OCI-LY7 (cell line): ENCODE measurements at regions of chr3 and their contacts with region 1.

Region 1: GRCh38 chr3:97971677-97972567 is at the start of gene RIOX2:
- DNase-seq: peak; percentile 79
- H3K4me3 ChIP-seq: peak within 1 kb of the TSS; percentile 73
- H3K27ac ChIP-seq: peak within 1 kb of the TSS; percentile 46
- H3K4me1 ChIP-seq: peaks cover 32% of the 10 kb centered on the region
- CTCF ChIP-seq: no peak
- total RNA-seq, gene RIOX2: 26.1 and 26.8 TPM in 2 replicates

Region 2: GRCh38 chr3:97764407-97765238 is 207.3 kb before region 1 on chr3 and contains the start of gene ARL6:
- CTCF ChIA-PET with region 1: no interaction called
- POLR2A ChIA-PET with region 1: interaction called, 3 read pairs
- intact Hi-C with region 1: loop called (anchors 5 kb)
- DNase-seq: peak; percentile 78
- H3K4me3 ChIP-seq: peak within 1 kb of the TSS; percentile 86
- H3K27ac ChIP-seq: peak within 1 kb of the TSS; percentile 48
- H3K4me1 ChIP-seq: peaks cover 10% of the 10 kb centered on the region
- CTCF ChIP-seq: peak; percentile 57; the same call in 1 of the 2 replicates
- total RNA-seq, gene ARL6: 5.0 and 8.6 TPM in 2 replicates

Region 3: DNA sequence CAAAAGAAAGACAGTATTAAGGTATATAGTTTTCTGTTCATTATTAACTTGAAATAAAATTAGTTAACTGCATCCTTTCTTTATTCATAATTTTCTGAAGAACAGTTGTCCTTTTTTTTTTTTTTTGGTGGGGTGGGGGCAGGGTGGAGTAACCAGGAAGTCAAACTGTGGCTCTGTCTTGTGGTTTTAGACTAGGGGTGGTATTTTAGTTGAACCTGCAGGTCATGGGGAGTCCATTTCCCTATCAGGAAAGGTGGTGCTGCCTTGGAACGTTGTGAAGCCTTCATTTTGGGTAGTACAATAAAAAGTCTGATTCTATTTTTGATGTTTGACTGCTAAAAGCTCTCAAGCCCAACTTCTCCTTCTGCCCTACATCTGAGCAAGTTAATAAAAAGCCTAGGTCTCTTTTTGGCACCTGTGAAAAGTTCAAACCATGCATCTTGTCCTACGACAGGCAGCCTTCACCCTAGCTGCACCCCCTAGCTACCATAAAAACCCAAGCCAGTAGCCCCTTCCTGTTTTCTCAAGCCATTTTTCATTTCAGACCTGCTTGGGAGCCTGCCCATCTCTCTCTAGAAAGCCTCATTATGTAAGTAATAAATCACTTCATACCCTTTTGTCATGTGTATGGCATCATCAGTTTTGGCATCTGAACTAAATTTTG is 31.5 kb after region 1 on chr3:
- CTCF ChIA-PET with region 1: no interaction called
- POLR2A ChIA-PET with region 1: interaction called, 5 read pairs
- intact Hi-C with region 1: loop called (anchors 2 kb)
- DNase-seq: peak; percentile 10
- H3K4me3 ChIP-seq: no peak overlapping the region
- H3K27ac ChIP-seq: no peak overlapping the region
- H3K4me1 ChIP-seq: peaks cover 9% of the 10 kb centered on the region
- CTCF ChIP-seq: no peak

Region 4: DNA sequence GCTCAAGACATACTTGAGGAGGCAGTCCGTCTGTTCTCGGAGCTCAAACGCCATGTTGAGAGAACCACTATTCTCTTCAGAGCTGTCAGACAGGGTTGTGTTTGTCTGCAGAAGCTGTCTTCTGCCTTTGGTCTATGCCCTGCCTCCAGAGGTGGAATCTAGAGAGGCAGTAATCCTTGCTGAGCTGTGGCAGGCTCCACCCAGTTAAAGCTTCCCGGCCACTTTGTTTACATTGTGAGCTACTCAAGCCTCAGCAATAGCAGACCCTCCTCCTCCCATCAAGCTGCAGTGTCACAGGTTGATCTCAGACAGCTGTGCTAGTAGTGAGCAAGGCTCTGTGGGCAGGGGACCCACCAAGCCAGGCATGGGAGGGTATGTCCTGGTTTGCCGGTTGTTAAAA is 123.9 kb after region 1 on chr3:
- CTCF ChIA-PET with region 1: no interaction called
- POLR2A ChIA-PET with region 1: no interaction called
- intact Hi-C with region 1: no loop called
- DNase-seq: no peak
- H3K4me3 ChIP-seq: no peak overlapping the region
- H3K27ac ChIP-seq: no peak overlapping the region
- H3K4me1 ChIP-seq: no peaks in the 10 kb centered on the region
- CTCF ChIP-seq: no peak

Region 5: DNA sequence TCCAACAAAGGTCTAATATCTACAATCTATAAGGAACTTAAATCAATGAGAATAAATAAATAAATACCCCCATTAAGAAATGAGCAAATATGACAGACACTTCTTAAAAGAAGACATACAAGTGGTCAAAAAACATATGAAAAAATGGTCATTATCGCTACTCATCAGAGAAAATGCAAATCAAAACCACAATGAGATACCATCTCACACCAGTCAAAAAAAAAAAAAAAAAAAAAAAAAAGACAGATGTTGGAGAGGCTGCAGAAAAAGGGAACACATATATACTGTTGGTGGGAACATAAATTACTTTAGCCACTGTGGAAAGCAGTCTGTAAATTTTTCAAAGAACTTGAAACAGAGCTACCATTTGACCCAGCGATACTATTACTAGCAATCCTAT is 260.6 kb after region 1 on chr3:
- CTCF ChIA-PET with region 1: no interaction called
- POLR2A ChIA-PET with region 1: no interaction called
- intact Hi-C with region 1: no loop called
- DNase-seq: no peak
- H3K4me3 ChIP-seq: no peak overlapping the region
- H3K27ac ChIP-seq: no peak overlapping the region
- H3K4me1 ChIP-seq: no peaks in the 10 kb centered on the region
- CTCF ChIP-seq: no peak